ENCODE measurements at regions of chr11 and their contacts with region 1.

Region 1: DNA sequence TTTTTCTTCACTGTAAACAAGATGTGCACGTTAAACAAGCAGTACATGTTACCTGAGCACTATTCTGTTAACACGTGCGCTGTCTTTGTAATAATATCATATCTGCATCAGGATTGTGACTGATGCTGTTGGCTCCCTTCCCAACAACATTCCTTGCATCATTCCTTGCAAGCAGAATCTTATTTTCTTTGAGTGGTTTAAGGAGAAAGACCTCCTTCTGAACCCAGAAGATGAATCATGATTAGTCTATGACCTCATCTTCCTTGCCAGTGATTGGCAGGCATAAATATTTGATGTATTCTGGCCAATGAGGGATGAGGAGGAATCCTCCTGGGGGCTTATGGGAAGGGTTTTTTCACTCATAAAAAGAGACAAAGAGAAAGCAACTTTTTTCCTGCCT is 46.2 kb downstream of the C11orf71 start:
- DNase-seq: peak; percentile 94
- H3K4me3 ChIP-seq: no peak overlapping the region
- H3K27ac ChIP-seq: no peak overlapping the region
- H3K4me1 ChIP-seq: peaks cover 22% of the 10 kb centered on the region
- H3K27me3 ChIP-seq: no peaks in the 10 kb centered on the region
- CTCF ChIP-seq: no peak

Region 2: DNA sequence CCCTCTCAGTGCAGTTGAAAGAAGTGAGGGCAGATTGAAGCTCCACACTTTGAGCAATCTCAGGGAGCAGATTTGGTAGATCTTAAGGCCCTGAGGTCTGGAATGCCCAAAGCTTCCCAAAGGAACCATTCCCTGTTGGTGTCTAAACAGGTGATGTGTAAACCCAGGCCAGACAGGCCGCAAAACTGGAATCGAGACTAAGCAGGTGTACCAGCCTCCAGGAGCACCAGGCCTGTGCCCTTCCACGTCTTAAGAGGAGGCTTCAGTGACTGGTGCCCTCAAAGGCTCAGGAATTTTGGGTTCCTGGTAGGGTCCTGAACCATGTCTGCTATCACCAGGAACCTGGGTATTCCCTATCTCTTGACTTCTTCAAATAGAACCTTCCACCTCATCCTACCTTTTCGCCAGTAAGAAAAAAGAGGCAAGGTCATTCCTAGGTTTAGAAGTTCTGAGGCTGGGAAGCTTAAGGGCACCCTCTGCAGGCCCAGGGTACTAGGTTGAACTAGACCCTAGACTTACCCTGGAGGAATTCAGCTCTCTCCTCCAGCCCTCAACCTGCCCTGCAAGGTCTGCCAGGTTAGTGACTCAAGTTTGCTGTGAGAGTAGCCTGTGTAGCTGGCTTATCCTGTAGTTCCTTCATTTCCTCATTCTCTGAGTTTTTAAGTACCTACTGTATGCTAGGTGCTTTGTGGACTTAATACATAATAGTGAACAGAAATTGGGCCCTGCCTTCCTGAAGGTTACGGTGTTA is 157.9 kb before region 1 on chr11:
- CTCF ChIA-PET with region 1: no interaction called
- dilution Hi-C with region 1: no loop called
- in situ Hi-C with region 1: no loop called
- intact Hi-C with region 1: no loop called
- DNase-seq: peak; percentile 34
- H3K4me3 ChIP-seq: no peak overlapping the region
- H3K27ac ChIP-seq: no peak overlapping the region
- H3K4me1 ChIP-seq: peaks cover 5% of the 10 kb centered on the region
- H3K27me3 ChIP-seq: no peaks in the 10 kb centered on the region
- CTCF ChIP-seq: peak in 1 of 2 donors; percentile 36

Region 3: GRCh38 chr11:114472661-114473060 is 118.6 kb after region 1 on chr11:
- CTCF ChIA-PET with region 1: no interaction called
- dilution Hi-C with region 1: no loop called
- in situ Hi-C with region 1: loop called in 1 of 2 experiments (anchors 25 kb)
- intact Hi-C with region 1: no loop called
- DNase-seq: no peak
- H3K4me3 ChIP-seq: no peak overlapping the region
- H3K27ac ChIP-seq: no peak overlapping the region
- H3K4me1 ChIP-seq: no peaks in the 10 kb centered on the region
- H3K27me3 ChIP-seq: no peaks in the 10 kb centered on the region
- CTCF ChIP-seq: no peak

Measured in mammary epithelial cell (primary cell).